Dendritic cell treated with granulocyte-macrophage colony-stimulating factor and Interleukin-4, amounts not matched to agents 40 ng/mL and 50 ng/mL, for 4 days (primary cell): ENCODE measurements at regions of chr2 and their contacts with region 1.

Region 1: GRCh38 chr2:88055371-88056128 is at the start of gene KRCC1:
- H3K4me3 Mint-ChIP-seq: peak within 1 kb of the TSS; percentile 96
- H3K27ac Mint-ChIP-seq: peak within 1 kb of the TSS; percentile 97
- H3K4me1 Mint-ChIP-seq: peaks cover 42% of the 10 kb centered on the region
- H3K27me3 Mint-ChIP-seq: no peaks in the 10 kb centered on the region

Region 2: GRCh38 chr2:88016086-88016959 is 39.2 kb before region 1 on chr2 and contains the start of gene RNU2-63P:
- intact Hi-C with region 1: loop called (anchors 1 kb)
- H3K4me3 Mint-ChIP-seq: peak within 1 kb of the TSS; percentile 87
- H3K27ac Mint-ChIP-seq: peak within 1 kb of the TSS; percentile 93
- H3K4me1 Mint-ChIP-seq: peaks cover 39% of the 10 kb centered on the region
- H3K27me3 Mint-ChIP-seq: peaks cover 1% of the 10 kb centered on the region

Region 3: DNA sequence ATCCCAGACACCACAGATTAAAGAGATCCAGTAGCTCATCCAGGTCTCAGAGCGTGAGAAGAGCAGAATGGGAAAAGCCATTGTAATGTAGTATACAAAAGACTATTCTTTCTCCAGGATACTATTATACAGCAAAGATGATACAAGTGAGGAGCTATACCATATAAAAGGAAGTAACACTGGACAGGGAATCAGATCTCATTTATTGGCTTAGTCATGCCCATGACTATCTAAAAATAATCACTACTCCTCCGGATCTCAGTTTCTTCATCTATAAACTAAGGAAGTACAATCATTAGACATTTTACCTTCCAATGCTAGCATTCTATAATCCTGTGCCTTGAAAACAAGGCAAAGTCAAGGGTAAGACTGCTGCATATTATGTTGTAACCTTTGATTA is 19.4 kb before region 1 on chr2:
- intact Hi-C with region 1: loop called (anchors 2 kb)
- H3K4me3 Mint-ChIP-seq: no peak overlapping the region
- H3K27ac Mint-ChIP-seq: peak overlapping the region; percentile 65
- H3K4me1 Mint-ChIP-seq: peaks cover 27% of the 10 kb centered on the region
- H3K27me3 Mint-ChIP-seq: no peaks in the 10 kb centered on the region

Region 4: DNA sequence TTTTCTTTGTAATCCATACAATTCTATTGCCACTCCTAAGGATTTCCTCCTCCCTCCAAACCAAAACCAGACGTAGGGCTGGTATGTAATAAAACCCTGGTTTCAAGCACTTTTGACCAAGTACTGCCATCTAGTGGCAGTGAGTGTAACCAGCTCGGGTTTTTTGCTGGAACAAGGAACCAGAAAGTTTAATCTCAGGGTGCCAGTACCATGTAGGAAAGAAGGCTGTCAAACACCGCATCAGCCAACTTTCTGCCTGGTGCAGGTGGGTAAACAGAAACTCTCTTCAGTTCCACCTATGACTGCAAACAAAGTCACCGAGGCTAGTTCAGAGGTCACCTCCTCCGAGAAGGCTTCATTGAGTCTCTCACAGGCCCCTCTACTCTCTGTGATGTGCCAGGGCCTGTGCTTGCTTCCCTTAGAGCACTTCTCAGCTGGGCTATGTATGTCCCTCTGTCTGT is 104.4 kb after region 1 on chr2:
- intact Hi-C with region 1: loop called (anchors 1 kb)
- H3K4me3 Mint-ChIP-seq: no peak overlapping the region
- H3K27ac Mint-ChIP-seq: no peak overlapping the region
- H3K4me1 Mint-ChIP-seq: peaks cover 1% of the 10 kb centered on the region
- H3K27me3 Mint-ChIP-seq: peaks cover 2% of the 10 kb centered on the region

Region 5: GRCh38 chr2:88170472-88170892 is 114.9 kb after region 1 on chr2:
- intact Hi-C with region 1: no loop called
- H3K4me3 Mint-ChIP-seq: peak overlapping the region; percentile 80
- H3K27ac Mint-ChIP-seq: peak overlapping the region; percentile 88
- H3K4me1 Mint-ChIP-seq: peaks cover 28% of the 10 kb centered on the region
- H3K27me3 Mint-ChIP-seq: peaks cover 15% of the 10 kb centered on the region

Region 6: DNA sequence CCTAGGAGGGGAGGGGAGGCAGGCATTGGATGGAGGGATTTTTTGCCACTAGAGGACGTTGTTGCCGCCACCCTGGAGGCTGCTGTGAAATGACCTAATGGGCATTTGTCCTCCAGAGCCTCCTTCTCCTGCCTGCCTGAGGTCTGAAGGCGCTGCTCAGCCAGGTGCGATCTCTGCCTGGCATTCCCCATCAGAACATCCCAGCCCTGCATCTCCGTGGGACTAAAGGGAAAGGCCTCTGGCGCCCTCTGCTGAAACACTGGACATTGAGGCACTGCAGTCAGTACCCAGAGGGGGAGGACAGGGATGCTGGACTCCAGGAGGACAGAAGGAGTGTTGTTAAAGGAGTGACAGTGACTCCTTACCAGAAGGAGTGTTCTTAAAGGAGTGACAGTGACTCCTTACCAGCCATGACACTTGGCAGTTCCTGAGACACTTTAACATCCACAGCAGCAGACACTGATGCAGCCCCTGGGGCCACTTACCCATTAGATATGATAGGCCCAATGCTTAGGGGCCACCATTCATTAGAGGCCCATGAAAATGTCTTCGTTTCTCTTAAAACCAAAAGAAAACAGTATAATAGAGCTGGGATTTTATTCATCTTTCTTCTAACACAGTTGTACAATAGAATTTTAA is 131.6 kb after region 1 on chr2:
- intact Hi-C with region 1: loop called (anchors 1 kb)
- H3K4me3 Mint-ChIP-seq: no peak overlapping the region
- H3K27ac Mint-ChIP-seq: no peak overlapping the region
- H3K4me1 Mint-ChIP-seq: peaks cover 11% of the 10 kb centered on the region
- H3K27me3 Mint-ChIP-seq: peaks cover 8% of the 10 kb centered on the region